Naive thymus-derived CD4-positive, alpha-beta T cell (primary cell): ENCODE measurements at regions of chr1 and their contacts with region 1.

Region 1: DNA sequence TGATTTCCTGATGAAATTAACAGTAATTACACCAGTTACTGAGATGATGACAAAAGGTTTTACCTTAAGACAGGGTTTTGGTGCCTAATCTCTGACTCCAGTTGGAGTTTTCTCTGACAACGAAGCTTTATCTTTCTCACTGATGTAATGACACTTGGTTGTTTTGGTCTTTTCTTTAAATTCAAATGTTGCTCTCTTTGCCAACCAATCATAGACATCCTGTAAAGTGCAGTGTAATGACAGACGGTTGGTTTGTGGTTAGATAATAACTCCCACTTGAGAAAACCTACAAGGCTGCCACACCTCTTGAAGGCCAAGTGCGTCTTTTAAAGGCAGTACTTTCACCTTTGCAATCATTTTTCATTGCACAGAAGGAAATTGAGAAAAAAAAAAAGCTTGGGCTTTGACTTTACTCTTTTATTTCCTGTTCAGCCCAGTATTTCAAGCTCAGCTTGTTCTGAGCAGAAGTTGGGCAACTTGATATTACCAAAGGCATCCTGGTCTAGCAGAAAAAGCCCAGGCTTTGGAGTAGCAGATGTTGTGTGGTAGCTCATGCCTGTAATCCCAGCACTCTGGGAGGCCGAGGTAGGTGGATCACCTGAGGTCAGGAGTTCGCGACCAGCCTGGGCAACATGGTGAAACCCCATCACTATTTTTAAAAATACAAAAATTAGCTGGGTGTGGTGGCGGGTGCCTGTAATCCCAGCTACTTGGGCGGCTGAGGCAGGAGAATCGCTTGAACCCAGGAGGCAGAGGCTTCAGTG is 14.9 kb downstream of the PDIK1L start:
- DNase-seq: peak in 8 of 9 donors; percentile 33 to 94 (median 90)
- ATAC-seq: peak; percentile 99
- H3K4me3 ChIP-seq: no peak overlapping the region
- H3K4me3 Mint-ChIP-seq: peak overlapping the region; percentile 60 to 91 (median 78)
- H3K27ac ChIP-seq: peak overlapping the region; percentile 61
- H3K27ac Mint-ChIP-seq: peak overlapping the region; percentile 86 to 98 (median 95)
- H3K4me1 ChIP-seq: peaks cover 19 to 24% of the 10 kb centered on the region in 2 donors
- H3K4me1 Mint-ChIP-seq: peaks cover 25 to 55% (median 52%) of the 10 kb centered on the region in 7 donors
- H3K27me3 ChIP-seq: no peaks in the 10 kb centered on the region
- H3K27me3 Mint-ChIP-seq: peaks cover 0 to 13% (median 0%) of the 10 kb centered on the region in 5 donors

Region 2: GRCh38 chr1:26102526-26102925 is 24.0 kb before region 1 on chr1:
- CTCF ChIA-PET with region 1: interaction called, 3 read pairs
- POLR2A ChIA-PET with region 1: interaction called, 4 read pairs
- intact Hi-C with region 1: loop called in 1 of 2 experiments (anchors 1 kb)
- DNase-seq: no peak
- ATAC-seq: no peak
- H3K4me3 ChIP-seq: no peak overlapping the region
- H3K4me3 Mint-ChIP-seq: no peak overlapping the region
- H3K27ac ChIP-seq: no peak overlapping the region
- H3K27ac Mint-ChIP-seq: no peak overlapping the region
- H3K4me1 ChIP-seq: no peaks in the 10 kb centered on the region
- H3K4me1 Mint-ChIP-seq: peaks cover 0 to 13% (median 6%) of the 10 kb centered on the region in 7 donors
- H3K27me3 ChIP-seq: no peaks in the 10 kb centered on the region
- H3K27me3 Mint-ChIP-seq: peaks cover 0 to 27% (median 0%) of the 10 kb centered on the region in 5 donors

Region 3: GRCh38 chr1:26138974-26139558 is 12.6 kb after region 1 on chr1:
- CTCF ChIA-PET with region 1: interaction called, 59 read pairs
- POLR2A ChIA-PET with region 1: interaction called, 18 read pairs
- intact Hi-C with region 1: loop called in 1 of 2 experiments (anchors 1 kb)
- DNase-seq: peak in 2 of 9 donors; percentile 17 to 26
- ATAC-seq: peak; percentile 44
- H3K4me3 ChIP-seq: no peak overlapping the region
- H3K4me3 Mint-ChIP-seq: peak overlapping the region in 9 of 10 donors; percentile 22 to 71 (median 37)
- H3K27ac ChIP-seq: peak overlapping the region; percentile 44
- H3K27ac Mint-ChIP-seq: peak overlapping the region in 6 of 9 donors; percentile 1 to 86 (median 51)
- H3K4me1 ChIP-seq: peaks cover 0 to 8% of the 10 kb centered on the region in 2 donors
- H3K4me1 Mint-ChIP-seq: peaks cover 6 to 17% (median 10%) of the 10 kb centered on the region in 7 donors
- H3K27me3 ChIP-seq: no peaks in the 10 kb centered on the region
- H3K27me3 Mint-ChIP-seq: peaks cover 0 to 7% (median 0%) of the 10 kb centered on the region in 5 donors

Region 4: GRCh38 chr1:26284597-26285360 is 158.3 kb after region 1 on chr1:
- CTCF ChIA-PET with region 1: no interaction called
- POLR2A ChIA-PET with region 1: interaction called, 3 read pairs
- intact Hi-C with region 1: loop called in 1 of 2 experiments (anchors 5 kb)
- DNase-seq: peak; percentile 60 to 97 (median 87)
- ATAC-seq: peak; percentile 81
- H3K4me3 ChIP-seq: peak overlapping the region; percentile 18
- H3K4me3 Mint-ChIP-seq: peak overlapping the region; percentile 44 to 88 (median 76)
- H3K27ac ChIP-seq: peak overlapping the region; percentile 86
- H3K27ac Mint-ChIP-seq: peak overlapping the region; percentile 90 to 99 (median 97)
- H3K4me1 ChIP-seq: peaks cover 89 to 91% of the 10 kb centered on the region in 2 donors
- H3K4me1 Mint-ChIP-seq: peaks cover 62 to 94% (median 86%) of the 10 kb centered on the region in 7 donors
- H3K27me3 ChIP-seq: no peaks in the 10 kb centered on the region
- H3K27me3 Mint-ChIP-seq: no peaks in the 10 kb centered on the region